ENCODE measurements at regions of chr15 and their contacts with region 1.

Region 1: DNA sequence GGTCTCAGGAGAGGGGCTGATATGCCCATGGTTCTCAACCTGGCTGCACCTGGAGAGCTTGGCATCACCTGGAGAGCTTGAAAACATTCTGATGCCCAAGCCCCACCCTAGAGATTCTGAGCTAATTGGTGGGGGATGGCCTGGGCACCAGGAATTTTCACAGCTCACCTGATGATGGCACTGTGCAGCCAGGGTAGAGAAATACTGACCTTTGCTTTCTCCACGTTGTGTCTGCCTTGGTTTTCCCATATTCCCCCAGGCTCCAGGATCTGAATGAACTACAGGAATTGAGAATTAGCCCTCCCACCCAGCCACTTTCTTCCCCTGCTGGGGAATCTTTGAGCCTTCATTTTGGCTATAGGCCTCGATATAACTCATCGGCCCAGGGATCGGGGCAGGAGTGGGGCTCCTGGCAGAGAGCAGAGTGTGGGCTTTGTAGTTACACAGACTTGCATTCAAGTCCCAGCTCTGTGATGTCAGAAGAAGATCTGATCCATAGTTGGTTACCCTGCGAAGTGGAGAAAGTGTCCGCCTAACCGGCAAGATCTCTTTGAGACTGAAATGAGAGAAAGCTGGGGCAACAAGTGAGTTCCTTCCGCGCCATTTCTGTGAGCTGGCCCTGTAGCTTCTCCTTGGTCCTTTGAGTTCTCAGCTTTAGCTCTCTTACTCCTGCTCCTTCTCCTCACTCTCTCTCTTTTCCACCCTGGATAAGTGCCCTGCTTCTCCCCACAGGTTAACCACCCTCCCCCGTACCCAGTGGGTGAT is 33.1 kb upstream of the UBE2Q2 start:
- DNase-seq: peak in 6 of 7 donors; percentile 18 to 64 (median 38)
- H3K4me3 ChIP-seq: no peak overlapping the region
- H3K27ac ChIP-seq: no peak overlapping the region
- H3K4me1 ChIP-seq: no peaks in the 10 kb centered on the region
- H3K27me3 ChIP-seq: no peaks in the 10 kb centered on the region
- CTCF ChIP-seq: peak in 5 of 6 experiments; percentile 27 to 56 (median 46)
- POLR2A ChIP-seq: no peak

Region 2: DNA sequence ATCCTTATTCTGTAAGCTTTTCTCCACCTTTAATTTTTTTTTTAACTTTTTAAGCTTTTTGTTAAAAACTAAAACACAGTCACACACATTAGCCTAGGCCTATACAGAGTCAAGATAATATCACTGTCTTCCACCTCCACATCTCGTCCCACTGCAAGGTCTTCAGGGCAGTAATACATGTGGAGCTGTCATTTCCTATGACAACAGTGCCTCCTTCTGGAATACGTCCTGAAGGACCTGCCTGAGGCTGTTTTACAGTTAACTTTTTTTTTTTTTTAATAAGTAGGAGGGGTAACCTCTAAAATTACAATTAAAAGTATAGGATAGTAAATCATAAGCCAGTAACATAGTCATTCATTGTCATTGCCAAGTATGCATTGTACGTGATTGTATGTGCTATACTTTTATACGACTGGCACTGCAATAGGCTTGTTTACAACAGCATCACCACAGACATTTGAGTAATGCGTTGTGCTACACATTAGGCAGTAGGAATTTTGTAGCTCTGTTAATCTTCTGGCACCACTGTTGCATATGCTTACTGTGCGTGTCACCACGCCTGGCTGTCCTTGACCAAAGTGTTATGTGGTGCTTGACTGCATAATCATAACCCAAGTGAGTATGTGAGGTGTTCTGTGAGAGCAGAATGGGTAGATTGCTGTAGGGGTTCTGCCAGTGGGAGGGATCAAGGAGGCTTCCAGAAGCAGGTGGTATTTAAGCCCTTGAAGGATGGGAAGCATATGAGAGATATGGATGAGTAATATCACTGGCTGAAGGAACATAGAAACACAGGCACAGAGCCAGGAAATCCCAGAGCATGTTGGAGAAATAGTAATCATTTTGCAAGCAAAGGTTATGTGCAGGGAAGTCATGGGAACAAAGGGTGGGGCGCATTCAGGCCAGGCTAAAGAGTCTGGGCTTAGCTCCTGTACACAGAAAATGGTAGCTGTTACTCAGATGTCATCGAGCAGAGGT is 111.8 kb after region 1 on chr15:
- intact Hi-C with region 1: loop called (anchors 10 kb)
- DNase-seq: peak; percentile 51 to 84 (median 78)
- H3K4me3 ChIP-seq: no peak overlapping the region
- H3K27ac ChIP-seq: peak overlapping the region in 2 of 5 donors; percentile 25 to 41
- H3K4me1 ChIP-seq: peaks cover 9 to 18% of the 10 kb centered on the region in 2 donors
- H3K27me3 ChIP-seq: no peaks in the 10 kb centered on the region
- CTCF ChIP-seq: peak; percentile 18 to 69 (median 55)
- POLR2A ChIP-seq: no peak